Activated naive CD4-positive, alpha-beta T cell treated with anti-CD3 and anti-CD28 coated beads for 36 hours (primary cell): ENCODE measurements at regions of chr1 and their contacts with region 1.

Region 1: GRCh38 chr1:179293340-179294327 is at the start of gene SOAT1:
- DNase-seq: peak; percentile 93
- H3K4me3 Mint-ChIP-seq: peak within 1 kb of the TSS; percentile 93
- H3K27ac Mint-ChIP-seq: peak within 1 kb of the TSS; percentile 89
- H3K4me1 Mint-ChIP-seq: peaks cover 44% of the 10 kb centered on the region
- H3K27me3 Mint-ChIP-seq: no peaks in the 10 kb centered on the region
- total RNA-seq, gene SOAT1: 38.8 to 42.4 TPM

Region 2: GRCh38 chr1:178725603-178726517 is 567.8 kb before region 1 on chr1:
- CTCF ChIA-PET with region 1: no interaction called
- intact Hi-C with region 1: loop called (anchors 5 kb)
- DNase-seq: peak; percentile 80
- H3K4me3 Mint-ChIP-seq: peak overlapping the region; percentile 73
- H3K27ac Mint-ChIP-seq: no peak overlapping the region
- H3K4me1 Mint-ChIP-seq: peaks cover 24% of the 10 kb centered on the region
- H3K27me3 Mint-ChIP-seq: no peaks in the 10 kb centered on the region

Region 3: GRCh38 chr1:179034720-179035119 is 258.9 kb before region 1 on chr1:
- CTCF ChIA-PET with region 1: no interaction called
- intact Hi-C with region 1: loop called (anchors 2 kb)
- DNase-seq: no peak
- H3K4me3 Mint-ChIP-seq: no peak overlapping the region
- H3K27ac Mint-ChIP-seq: peak overlapping the region; percentile 77
- H3K4me1 Mint-ChIP-seq: peaks cover 85% of the 10 kb centered on the region
- H3K27me3 Mint-ChIP-seq: no peaks in the 10 kb centered on the region

Region 4: GRCh38 chr1:179121159-179121938 is 172.3 kb before region 1 on chr1:
- CTCF ChIA-PET with region 1: interaction called, 13 read pairs
- intact Hi-C with region 1: loop called (anchors 1 kb)
- DNase-seq: peak; percentile 64
- H3K4me3 Mint-ChIP-seq: no peak overlapping the region
- H3K27ac Mint-ChIP-seq: no peak overlapping the region
- H3K4me1 Mint-ChIP-seq: peaks cover 3% of the 10 kb centered on the region
- H3K27me3 Mint-ChIP-seq: no peaks in the 10 kb centered on the region

Region 5: DNA sequence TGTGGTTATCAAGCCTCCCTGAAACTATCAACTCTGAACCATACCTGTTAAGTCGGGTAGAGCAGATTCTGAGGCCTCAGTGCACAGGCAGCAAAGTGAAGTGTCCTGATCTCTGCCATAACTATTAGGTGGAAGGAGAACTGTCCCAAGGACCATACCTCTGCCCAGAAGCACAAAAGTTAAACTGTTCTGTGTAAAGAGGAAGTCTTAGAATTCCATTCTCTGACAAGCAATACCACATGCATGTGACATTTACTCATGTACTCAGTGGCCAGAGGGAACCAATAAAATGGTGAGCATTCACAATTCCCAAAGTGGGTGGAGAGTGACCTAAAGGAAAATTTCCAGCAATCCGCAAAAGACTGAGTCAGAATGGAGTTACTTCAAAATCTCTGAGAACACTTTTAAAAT is 150.7 kb before region 1 on chr1:
- CTCF ChIA-PET with region 1: no interaction called
- intact Hi-C with region 1: loop called (anchors 5 kb)
- DNase-seq: peak; percentile 30
- H3K4me3 Mint-ChIP-seq: peak overlapping the region; percentile 32
- H3K27ac Mint-ChIP-seq: peak overlapping the region; percentile 68
- H3K4me1 Mint-ChIP-seq: peaks cover 41% of the 10 kb centered on the region
- H3K27me3 Mint-ChIP-seq: no peaks in the 10 kb centered on the region

Region 6: GRCh38 chr1:179229214-179230140 is 64.2 kb before region 1 on chr1 and contains the start of gene ABL2:
- CTCF ChIA-PET with region 1: no interaction called
- intact Hi-C with region 1: loop called (anchors 1 kb)
- DNase-seq: peak; percentile 49
- H3K4me3 Mint-ChIP-seq: peak within 1 kb of the TSS; percentile 90
- H3K27ac Mint-ChIP-seq: peak within 1 kb of the TSS; percentile 85
- H3K4me1 Mint-ChIP-seq: peaks cover 31% of the 10 kb centered on the region
- H3K27me3 Mint-ChIP-seq: no peaks in the 10 kb centered on the region
- total RNA-seq, gene ABL2: 8.1 TPM

Region 7: GRCh38 chr1:179380299-179380698 is 86.7 kb after region 1 on chr1:
- CTCF ChIA-PET with region 1: no interaction called
- intact Hi-C with region 1: no loop called
- DNase-seq: no peak
- H3K4me3 Mint-ChIP-seq: no peak overlapping the region
- H3K27ac Mint-ChIP-seq: no peak overlapping the region
- H3K4me1 Mint-ChIP-seq: no peaks in the 10 kb centered on the region
- H3K27me3 Mint-ChIP-seq: no peaks in the 10 kb centered on the region

Region 8: DNA sequence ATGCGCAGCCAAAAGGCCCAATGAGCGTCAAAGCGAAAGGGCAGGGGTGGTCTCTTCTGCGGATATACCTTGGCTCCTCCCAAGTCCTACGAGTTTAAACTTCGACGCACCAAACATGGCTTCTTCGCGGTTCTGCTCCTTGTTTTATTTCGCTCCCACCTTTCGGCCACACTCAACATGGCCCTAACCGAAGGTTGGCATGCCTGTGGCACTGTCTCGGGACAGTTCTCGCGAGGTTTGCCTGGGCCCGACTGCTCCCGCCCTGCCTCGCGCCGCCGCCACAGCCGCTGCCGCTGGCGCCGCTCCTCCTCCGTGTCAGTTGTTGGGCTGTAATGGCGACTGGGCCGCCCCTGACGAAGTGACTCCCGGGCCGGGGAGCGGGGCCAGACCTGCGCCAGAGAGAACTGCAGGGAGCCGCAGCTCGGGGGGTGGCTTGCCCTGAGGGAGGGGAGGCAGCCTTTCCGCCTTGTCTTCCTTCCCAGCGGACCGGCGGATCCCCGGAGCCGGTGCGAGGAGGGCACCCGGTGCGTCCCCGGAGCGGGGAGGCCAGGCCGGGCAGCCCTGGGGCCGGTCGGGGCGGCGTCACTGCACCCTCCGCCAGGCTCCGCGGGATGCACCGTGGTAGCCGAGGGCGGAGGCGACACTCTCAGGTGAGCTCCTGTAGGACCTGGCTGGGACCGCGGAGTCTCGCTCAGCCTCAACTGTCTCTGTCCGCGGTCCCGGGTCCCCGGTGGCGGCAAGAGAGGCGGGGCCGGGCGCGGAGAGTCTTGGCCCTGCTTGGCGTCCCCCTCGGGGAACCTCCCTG is 661.1 kb after region 1 on chr1 and contains the start of gene CEP350:
- CTCF ChIA-PET with region 1: no interaction called
- intact Hi-C with region 1: loop called (anchors 2 kb)
- DNase-seq: peak; percentile 99
- H3K4me3 Mint-ChIP-seq: peak within 1 kb of the TSS; percentile 85
- H3K27ac Mint-ChIP-seq: peak within 1 kb of the TSS; percentile 95
- H3K4me1 Mint-ChIP-seq: peaks cover 41% of the 10 kb centered on the region
- H3K27me3 Mint-ChIP-seq: no peaks in the 10 kb centered on the region
- total RNA-seq, gene CEP350: 30.3 to 36.0 TPM